ENCODE measurements at regions of chr20 and their contacts with region 1.

Region 1: DNA sequence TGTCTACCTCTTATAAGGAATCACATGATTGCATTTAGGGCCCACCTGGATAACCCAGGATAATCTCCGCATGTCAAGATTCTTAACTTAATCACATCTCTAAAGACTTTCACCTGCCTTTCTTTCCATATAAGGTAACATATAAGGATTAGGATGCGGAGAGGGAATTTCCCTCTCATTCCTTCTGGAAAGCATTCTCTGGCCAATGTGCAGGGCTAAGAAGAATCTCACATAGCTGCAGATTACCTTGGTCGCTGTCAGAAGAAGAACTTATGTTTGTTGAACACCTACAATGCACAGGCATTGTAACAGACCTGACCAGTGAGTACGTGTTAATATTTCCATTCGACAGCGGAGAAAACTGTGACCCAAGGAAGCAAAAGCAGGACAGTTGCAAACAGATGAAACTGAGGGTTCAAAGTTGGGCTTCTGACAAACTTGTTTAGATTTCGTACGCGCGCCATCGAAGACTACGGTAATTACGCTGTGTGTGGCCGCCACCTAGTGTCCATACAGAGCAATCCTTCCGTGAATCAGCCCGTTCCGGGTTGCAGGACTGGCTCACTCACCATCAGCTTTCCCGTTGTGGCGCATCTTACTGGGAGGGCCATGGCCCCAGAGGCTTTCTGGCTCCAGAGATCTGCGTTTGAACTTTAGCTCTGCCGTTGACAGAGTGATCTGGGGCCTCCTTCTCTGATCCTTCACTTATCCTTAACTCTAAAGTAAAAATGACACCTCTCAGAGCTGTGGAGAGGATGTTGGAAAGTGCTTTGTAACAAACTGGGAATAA is 9.5 kb downstream of the C20orf202 start:
- DNase-seq: peak; percentile 87
- ATAC-seq: peak; percentile 95
- H3K4me3 ChIP-seq: no peak overlapping the region
- H3K27ac ChIP-seq: no peak overlapping the region
- H3K4me1 ChIP-seq: 0 out of 2 replicates have a peak, but pooled peaks cover 3% of the 10 kb centered on the region
- H3K27me3 ChIP-seq: no peaks in the 10 kb centered on the region
- CTCF ChIP-seq: peak; percentile 91

Region 2: DNA sequence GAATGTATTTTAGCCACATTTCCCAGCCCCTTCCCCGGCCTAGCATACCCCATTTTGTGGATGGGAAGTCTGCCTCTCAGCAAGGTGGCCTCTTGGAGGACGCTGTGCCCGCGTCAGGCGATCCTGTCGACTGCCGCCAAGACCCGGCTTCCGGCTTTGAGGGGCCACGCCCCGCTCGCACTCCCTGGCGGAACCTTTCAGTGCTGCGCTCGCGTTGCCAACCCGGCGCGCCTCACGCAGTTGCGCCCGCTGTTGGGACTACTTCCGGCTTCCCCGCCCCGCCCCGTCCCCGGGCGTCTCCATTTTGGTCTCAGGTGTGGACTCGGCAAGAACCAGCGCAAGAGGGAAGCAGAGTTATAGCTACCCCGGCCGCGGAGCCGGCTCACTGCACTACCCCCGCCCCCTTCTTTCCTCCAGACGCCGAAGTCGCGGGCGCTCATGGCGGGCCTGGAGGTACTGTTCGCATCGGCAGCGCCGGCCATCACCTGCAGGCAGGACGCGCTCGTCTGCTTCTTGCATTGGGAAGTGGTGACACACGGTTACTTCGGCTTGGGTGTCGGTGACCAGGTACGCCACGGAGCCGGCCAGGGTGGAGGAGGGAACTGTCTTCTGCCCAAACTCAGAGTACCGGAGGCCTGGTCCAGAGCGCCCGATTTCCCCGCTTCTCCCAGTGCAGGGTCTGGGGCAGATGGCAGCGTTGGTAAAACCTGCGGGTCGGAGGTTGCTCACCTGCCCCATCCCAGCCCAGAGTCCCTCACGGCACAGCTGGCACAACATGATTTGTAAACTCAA is 94.3 kb before region 1 on chr20 and contains the start of gene PSMF1:
- CTCF ChIA-PET with region 1: no interaction called
- POLR2A ChIA-PET with region 1: no interaction called
- intact Hi-C with region 1: loop called (anchors 5 kb)
- DNase-seq: peak; percentile 97
- ATAC-seq: peak; percentile 90
- H3K4me3 ChIP-seq: peak within 1 kb of the TSS; percentile 80
- H3K27ac ChIP-seq: peak within 1 kb of the TSS; percentile 26
- H3K4me1 ChIP-seq: peaks cover 45% of the 10 kb centered on the region
- H3K27me3 ChIP-seq: no peaks in the 10 kb centered on the region
- CTCF ChIP-seq: no peak
- total RNA-seq, gene PSMF1: 60.8 and 82.1 TPM in 2 replicates

Region 3: DNA sequence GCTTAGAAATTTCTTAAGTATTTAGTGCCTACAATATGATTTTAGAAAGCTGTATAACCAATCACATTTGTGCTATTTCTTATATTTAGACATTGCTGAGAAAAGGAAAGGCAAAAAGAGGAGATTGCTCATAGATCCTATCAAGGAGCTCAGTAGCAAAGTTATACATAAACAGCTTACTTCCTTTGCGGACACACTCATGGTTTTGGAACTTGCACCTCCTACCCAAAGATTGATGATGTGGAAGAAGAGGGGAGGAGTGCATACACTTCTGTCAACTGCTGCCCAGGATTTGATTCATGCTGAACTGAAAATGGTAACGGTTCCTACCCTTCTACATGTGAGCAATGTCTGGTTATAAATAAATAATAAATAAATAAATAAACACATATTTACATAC is 29.7 kb after region 1 on chr20:
- CTCF ChIA-PET with region 1: no interaction called
- POLR2A ChIA-PET with region 1: no interaction called
- intact Hi-C with region 1: no loop called
- DNase-seq: peak; percentile 86
- ATAC-seq: peak; percentile 99
- H3K4me3 ChIP-seq: no peak overlapping the region
- H3K27ac ChIP-seq: peak overlapping the region; percentile 50; the same call in 1 of the 2 replicates
- H3K4me1 ChIP-seq: peaks cover 14% of the 10 kb centered on the region; the same call in 1 of the 2 replicates
- H3K27me3 ChIP-seq: no peaks in the 10 kb centered on the region
- CTCF ChIP-seq: no peak

Region 4: DNA sequence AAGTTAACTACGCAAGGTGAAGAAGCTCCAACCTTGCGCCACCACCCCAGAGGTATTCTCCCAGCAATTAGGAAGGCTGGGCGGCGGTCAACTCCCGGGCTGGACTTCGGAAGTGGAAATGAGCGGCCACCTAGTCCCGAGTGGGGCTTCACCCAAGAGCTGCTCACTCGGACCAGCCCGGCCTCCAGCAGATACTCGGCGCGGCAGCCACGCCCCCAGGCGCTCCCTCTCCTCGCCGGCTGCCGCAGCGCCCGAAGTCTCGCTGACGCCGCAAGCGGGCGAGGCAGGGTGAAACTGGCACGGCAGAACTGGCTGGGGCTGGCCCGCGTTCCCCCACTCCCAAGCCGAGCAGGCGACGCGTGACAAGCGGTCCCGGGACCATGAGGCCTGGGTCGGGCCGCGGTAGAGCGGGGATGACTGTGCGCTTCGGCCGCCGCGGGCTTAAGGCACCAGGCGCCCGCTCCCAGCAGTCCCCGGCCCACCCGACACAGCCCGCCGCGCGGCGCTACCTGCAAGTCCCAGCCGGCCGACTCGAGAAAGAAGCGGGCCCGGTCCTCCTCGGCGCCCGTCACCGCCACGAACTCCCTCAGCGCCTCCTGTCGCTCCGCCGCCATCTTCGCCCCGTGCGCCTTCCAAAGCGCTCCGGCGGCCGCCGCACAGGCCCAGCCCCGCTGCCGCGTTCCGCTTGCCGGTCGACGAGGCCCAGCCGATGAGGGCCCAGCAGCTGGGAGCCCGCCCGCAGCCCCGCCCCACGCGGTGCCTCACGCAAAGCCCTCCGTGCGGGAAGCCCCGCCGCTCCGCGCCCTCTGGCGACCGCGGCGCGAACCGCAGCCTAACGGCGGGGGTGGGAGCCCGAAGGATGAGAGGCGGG is 253.6 kb after region 1 on chr20 and contains the start of gene NSFL1C:
- CTCF ChIA-PET with region 1: no interaction called
- POLR2A ChIA-PET with region 1: no interaction called
- intact Hi-C with region 1: loop called (anchors 1 kb)
- DNase-seq: peak; percentile 99
- ATAC-seq: peak; percentile 77
- H3K4me3 ChIP-seq: peak within 1 kb of the TSS; percentile 77
- H3K27ac ChIP-seq: peak within 1 kb of the TSS; percentile 85
- H3K4me1 ChIP-seq: peaks cover 49% of the 10 kb centered on the region
- H3K27me3 ChIP-seq: no peaks in the 10 kb centered on the region
- CTCF ChIP-seq: peak; percentile 91
- total RNA-seq, gene NSFL1C: 170 and 217 TPM in 2 replicates

Region 5: DNA sequence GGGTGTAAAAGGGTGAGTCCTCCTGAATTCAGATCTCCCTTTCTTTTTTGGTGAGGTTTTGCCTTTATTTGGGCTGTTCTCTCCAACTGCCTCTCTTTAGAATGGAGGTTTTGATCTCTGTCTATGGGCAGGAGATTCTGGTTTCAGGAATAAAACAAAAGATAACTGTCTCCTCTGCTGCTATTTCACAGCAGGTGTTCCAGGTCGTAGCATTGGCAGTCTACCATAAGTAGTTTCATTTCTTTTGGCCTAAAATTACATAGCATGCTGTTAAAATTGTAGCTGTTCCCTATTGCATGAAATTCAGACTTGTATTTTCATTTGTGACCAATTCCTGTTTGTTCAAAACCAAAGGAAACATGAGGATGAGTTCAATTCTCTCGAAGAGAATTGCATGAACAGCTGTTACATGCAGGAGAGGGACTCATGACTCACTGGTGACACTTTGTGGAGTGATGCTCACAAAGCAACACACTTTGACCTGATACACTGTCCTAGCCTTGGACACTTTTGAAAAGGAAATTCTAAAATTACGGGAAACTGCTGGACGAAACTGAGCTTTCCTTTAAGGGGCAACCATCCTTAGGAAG is 521.6 kb after region 1 on chr20:
- CTCF ChIA-PET with region 1: no interaction called
- POLR2A ChIA-PET with region 1: no interaction called
- intact Hi-C with region 1: no loop called
- DNase-seq: peak; percentile 79
- ATAC-seq: peak; percentile 97
- H3K4me3 ChIP-seq: no peak overlapping the region
- H3K27ac ChIP-seq: peak overlapping the region; percentile 62
- H3K4me1 ChIP-seq: peaks cover 19% of the 10 kb centered on the region
- H3K27me3 ChIP-seq: no peaks in the 10 kb centered on the region
- CTCF ChIP-seq: peak; percentile 84

Measured in PC-3 (cell line).